ENCODE measurements at regions of chr1 and their contacts with region 1.

Region 1: DNA sequence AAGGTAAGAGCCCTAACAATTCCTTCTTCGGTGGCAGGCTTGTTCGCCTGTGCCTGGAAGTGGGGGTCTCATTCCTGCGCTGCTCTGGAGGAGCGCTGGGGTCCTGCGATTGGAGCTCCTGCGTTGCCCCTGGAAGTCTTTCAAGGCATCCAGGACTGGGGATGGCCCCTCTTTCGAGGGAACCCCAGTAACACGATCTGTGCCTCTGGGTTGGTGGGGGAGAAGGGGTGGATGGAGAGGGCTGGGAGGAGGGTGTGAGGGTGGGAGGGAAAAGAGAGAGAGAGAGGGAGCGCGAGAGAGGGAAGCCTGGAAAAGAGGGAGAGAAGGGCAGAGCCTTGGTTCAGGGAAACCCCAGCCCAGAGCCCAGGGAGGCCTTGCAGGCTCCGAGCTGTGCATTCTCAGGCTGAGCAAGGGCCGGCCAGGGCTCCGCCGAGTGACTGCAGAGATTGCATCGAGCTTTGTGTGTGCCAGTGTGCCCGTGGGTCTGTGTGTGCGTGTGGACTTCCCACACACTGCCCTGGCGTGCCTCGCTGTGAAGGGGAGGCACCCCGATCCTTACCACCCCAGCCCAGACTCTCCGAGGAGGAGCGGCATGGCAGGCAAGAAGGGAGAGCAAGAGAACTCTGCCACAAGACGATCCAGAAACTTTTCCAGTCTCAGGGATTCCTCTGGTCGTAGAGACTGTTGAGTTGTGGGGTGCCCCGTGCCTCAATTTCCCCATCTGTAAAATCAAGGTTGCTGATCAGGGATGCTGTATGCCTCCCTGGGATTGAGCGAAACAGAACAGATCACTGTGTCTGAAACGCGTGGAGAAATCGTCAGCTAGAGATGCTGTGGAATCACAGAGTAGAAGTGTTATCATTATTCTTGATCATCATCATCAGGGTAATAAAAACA is 619 bp downstream of the BCL9 start:
- DNase-seq: peak in 1 of 2 donors; percentile 75
- H3K4me3 ChIP-seq: peak overlapping the region; percentile 73
- H3K27ac ChIP-seq: peak overlapping the region; percentile 89 to 94
- H3K4me1 ChIP-seq: peaks cover 0 to 25% of the 10 kb centered on the region in 2 donors
- H3K27me3 ChIP-seq: no peaks in the 10 kb centered on the region
- CTCF ChIP-seq: no peak

Region 2: GRCh38 chr1:147172168-147172992 is 369.5 kb before region 1 on chr1 and contains the start of gene PRKAB2:
- intact Hi-C with region 1: loop called (anchors 5 kb)
- DNase-seq: peak; percentile 85 to 98
- H3K4me3 ChIP-seq: peak within 1 kb of the TSS; percentile 76 to 88
- H3K27ac ChIP-seq: peak within 1 kb of the TSS; percentile 89 to 93
- H3K4me1 ChIP-seq: peaks cover 3 to 13% of the 10 kb centered on the region in 2 donors
- H3K27me3 ChIP-seq: no peaks in the 10 kb centered on the region
- CTCF ChIP-seq: peak; percentile 73 to 97 (median 89)
- total RNA-seq, gene PRKAB2: 15.4 TPM

Region 3: DNA sequence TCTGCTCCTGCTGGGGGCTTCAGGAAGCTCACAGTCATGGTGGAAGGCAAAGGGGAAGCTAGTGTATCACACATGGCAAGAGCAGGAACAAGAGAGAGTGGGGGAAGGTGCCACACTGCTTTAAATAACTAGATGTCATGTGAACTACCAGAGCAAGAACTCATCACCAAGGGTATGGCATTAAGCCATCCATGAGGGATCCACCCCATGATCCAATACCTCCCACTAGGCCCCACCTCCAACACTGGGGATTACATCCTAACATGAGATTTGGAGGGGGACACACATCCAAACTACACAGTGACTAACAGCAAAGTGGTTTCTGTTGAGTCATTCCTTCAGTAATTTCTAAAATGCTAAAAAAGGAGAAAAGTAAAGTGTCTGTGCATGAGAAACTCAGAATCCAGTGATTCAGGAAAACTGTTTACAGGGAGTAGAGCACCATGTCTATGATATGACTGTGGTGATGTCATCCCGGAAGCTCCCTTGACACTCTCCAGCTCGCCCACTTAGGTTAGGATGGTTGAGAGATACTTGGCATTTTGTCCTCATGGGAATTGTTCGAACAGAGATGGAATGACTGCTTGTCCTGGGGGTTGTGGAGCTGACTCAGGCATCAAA is 249.2 kb before region 1 on chr1:
- intact Hi-C with region 1: loop called (anchors 5 kb)
- DNase-seq: peak; percentile 12 to 77
- H3K4me3 ChIP-seq: no peak overlapping the region
- H3K27ac ChIP-seq: peak overlapping the region; percentile 54 to 76
- H3K4me1 ChIP-seq: peaks cover 0 to 2% of the 10 kb centered on the region in 2 donors
- H3K27me3 ChIP-seq: no peaks in the 10 kb centered on the region
- CTCF ChIP-seq: no peak

Region 4: GRCh38 chr1:147494998-147495580 is 46.8 kb before region 1 on chr1:
- intact Hi-C with region 1: loop called (anchors 2 kb)
- DNase-seq: peak; percentile 19 to 86
- H3K4me3 ChIP-seq: no peak overlapping the region
- H3K27ac ChIP-seq: no peak overlapping the region
- H3K4me1 ChIP-seq: no peaks in the 10 kb centered on the region
- H3K27me3 ChIP-seq: no peaks in the 10 kb centered on the region
- CTCF ChIP-seq: peak; percentile 76 to 93 (median 86)

Region 5: DNA sequence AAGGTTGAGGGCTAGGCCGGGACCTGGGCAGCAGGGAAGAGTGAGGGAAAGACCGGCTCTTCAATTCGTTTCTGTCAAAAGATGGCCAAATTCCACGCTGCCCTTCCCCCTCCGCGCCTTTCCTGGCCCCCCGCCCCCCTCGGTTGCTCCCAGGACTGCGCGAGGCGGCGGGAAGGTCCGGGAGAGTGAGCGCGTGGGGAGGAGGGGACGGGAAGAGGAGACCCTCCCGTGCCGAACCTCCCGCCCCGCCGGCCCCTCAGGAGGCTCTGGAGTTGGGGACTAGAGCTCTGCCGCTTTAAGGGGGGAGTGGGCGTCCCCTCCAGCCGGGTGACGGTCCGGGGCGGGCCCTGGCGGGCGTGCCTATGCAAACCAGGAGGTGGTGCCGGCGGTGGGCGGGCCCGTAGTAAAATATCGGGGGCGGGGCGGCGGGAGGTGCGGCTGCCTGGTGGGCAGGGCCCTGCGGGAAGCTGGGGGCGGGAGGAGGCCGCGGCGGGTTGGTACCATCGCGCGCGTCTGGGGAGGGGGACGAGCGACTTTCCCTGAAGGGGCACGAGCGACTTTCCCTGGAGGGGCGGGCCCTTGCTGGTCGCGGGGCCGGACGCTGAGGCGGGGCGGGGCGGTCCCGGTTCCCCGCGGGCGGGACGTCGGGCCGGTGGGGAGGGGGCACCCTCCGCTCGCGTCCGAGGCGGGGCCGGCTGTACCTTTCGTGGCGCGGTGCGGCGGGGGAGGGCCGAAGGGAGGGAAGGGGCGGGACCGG is 57.6 kb after region 1 on chr1:
- intact Hi-C with region 1: loop called (anchors 1 kb)
- DNase-seq: peak; percentile 83 to 98
- H3K4me3 ChIP-seq: peak overlapping the region; percentile 88 to 90
- H3K27ac ChIP-seq: peak overlapping the region; percentile 91 to 92
- H3K4me1 ChIP-seq: peaks cover 0 to 15% of the 10 kb centered on the region in 2 donors
- H3K27me3 ChIP-seq: no peaks in the 10 kb centered on the region
- CTCF ChIP-seq: no peak

Region 6: DNA sequence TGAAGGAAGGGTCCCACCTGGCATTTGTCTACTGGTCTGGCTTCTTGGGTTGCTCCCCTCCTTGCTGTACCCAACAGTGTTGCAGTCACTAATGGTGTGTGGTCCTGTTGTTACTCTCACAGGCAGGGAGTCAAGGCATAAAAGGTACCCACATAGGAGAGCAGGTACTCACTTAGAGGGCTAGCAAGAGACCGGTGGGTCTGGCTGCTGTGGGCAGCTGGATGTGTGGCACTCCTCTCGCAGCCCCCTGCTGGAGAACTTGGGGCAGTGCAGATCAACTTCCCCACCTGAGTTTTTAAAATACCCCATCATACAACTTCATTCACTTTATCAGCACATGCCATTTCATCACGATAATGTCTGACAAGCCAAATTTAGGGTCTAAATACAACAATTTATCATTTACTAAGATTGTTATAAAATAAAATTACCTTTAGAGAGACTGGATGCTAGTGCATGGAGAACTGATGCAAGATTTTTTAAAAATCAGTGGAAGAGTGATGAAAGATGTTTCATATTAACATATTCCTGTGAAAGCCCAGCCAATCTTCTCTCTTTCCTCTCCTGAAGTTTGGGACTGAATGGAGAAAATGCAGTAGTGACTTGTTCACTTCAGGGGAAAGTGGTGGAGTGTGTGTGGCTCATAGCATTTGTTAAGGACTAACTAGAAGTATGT is 85.7 kb after region 1 on chr1:
- intact Hi-C with region 1: loop called (anchors 2 kb)
- DNase-seq: peak in 1 of 2 donors; percentile 73
- H3K4me3 ChIP-seq: no peak overlapping the region
- H3K27ac ChIP-seq: no peak overlapping the region
- H3K4me1 ChIP-seq: no peaks in the 10 kb centered on the region
- H3K27me3 ChIP-seq: no peaks in the 10 kb centered on the region
- CTCF ChIP-seq: peak; percentile 71 to 93 (median 84)

Region 7: DNA sequence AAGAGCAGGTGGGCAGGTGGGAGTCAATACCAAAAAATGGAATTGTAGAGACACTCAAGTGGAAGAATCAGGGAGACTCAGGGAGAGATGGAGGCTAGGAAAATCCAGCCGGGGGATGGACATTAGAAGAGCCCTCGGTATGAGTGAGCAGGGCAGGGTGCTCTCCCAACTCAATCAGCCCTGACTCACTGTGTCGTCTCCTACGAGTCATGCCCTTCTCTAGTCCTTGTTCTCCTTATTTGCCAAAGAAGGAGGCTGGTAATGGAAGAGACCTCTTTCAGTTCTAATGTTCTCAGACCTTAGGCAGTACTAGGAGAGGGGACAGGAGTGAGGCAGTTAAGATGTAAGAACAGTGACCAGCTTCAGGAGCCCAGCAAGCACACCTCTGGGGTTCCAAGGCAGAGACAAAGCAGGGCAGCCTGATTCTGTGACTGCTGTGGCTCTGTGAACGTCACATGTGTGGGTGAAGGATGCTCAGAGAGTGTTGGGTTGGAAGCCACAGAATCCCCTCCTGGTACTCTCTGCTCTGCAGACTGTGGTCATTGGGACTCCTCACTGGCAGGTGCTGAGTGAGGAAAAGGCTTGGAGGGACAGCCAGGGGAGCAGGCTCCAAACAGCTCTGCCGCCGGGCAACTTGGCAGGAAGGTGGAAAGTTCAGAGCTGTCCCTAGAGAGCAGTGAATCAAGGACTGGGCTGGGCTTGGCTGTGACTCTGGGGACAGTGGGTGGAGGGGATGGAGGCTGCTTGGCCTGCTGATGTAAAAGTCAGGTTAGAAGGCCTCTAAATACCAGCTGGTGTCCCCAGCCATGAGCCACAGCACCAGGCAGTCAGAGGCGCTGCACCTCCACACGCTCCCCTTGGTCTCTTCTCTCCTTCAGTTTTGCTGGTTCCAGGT is 229.6 kb after region 1 on chr1:
- intact Hi-C with region 1: loop called (anchors 5 kb)
- DNase-seq: peak; percentile 51 to 91
- H3K4me3 ChIP-seq: peak overlapping the region; percentile 44 to 56
- H3K27ac ChIP-seq: peak overlapping the region; percentile 91 to 94
- H3K4me1 ChIP-seq: peaks cover 26 to 51% of the 10 kb centered on the region in 2 donors
- H3K27me3 ChIP-seq: no peaks in the 10 kb centered on the region
- CTCF ChIP-seq: no peak